Transverse colon (tissue), 4 donors: ENCODE measurements at regions of chr21 and their contacts with region 1.

Region 1: GRCh38 chr21:42561762-42562650 is 48.4 kb downstream of the SLC37A1 start:
- DNase-seq: peak; percentile 44
- H3K4me3 ChIP-seq: no peak overlapping the region
- H3K27ac ChIP-seq: peak overlapping the region in 3 of 4 donors; percentile 5 to 58 (median 25)
- H3K4me1 ChIP-seq: peaks cover 0 to 4% (median 0%) of the 10 kb centered on the region in 4 donors
- H3K27me3 ChIP-seq: no peaks in the 10 kb centered on the region
- CTCF ChIP-seq: no peak
- EP300 ChIP-seq: no peak
- POLR2A ChIP-seq: peak; percentile 22

Region 2: GRCh38 chr21:42309753-42310221 is 252.2 kb before region 1 on chr21:
- in situ Hi-C with region 1: loop called in 1 of 4 experiments (anchors 25 kb)
- intact Hi-C with region 1: no loop called
- DNase-seq: peak; percentile 80
- H3K4me3 ChIP-seq: no peak overlapping the region
- H3K27ac ChIP-seq: peak overlapping the region; percentile 4 to 87 (median 82)
- H3K4me1 ChIP-seq: peaks cover 18 to 45% (median 24%) of the 10 kb centered on the region in 4 donors
- H3K27me3 ChIP-seq: peaks cover 11% of the 10 kb centered on the region
- CTCF ChIP-seq: peak; percentile 70 to 90 (median 86)
- EP300 ChIP-seq: no peak
- POLR2A ChIP-seq: peak; percentile 18

Region 3: GRCh38 chr21:43959231-43960116 is 1397.5 kb after region 1 on chr21:
- in situ Hi-C with region 1: no loop called
- intact Hi-C with region 1: loop called (anchors 10 kb)
- DNase-seq: no peak
- H3K4me3 ChIP-seq: no peak overlapping the region
- H3K27ac ChIP-seq: no peak overlapping the region
- H3K4me1 ChIP-seq: peaks cover 0 to 3% (median 0%) of the 10 kb centered on the region in 4 donors
- H3K27me3 ChIP-seq: no peaks in the 10 kb centered on the region
- CTCF ChIP-seq: no peak
- EP300 ChIP-seq: no peak
- POLR2A ChIP-seq: no peak